K562 (cell line): ENCODE measurements at regions of chr13 and their contacts with region 1.

Region 1: DNA sequence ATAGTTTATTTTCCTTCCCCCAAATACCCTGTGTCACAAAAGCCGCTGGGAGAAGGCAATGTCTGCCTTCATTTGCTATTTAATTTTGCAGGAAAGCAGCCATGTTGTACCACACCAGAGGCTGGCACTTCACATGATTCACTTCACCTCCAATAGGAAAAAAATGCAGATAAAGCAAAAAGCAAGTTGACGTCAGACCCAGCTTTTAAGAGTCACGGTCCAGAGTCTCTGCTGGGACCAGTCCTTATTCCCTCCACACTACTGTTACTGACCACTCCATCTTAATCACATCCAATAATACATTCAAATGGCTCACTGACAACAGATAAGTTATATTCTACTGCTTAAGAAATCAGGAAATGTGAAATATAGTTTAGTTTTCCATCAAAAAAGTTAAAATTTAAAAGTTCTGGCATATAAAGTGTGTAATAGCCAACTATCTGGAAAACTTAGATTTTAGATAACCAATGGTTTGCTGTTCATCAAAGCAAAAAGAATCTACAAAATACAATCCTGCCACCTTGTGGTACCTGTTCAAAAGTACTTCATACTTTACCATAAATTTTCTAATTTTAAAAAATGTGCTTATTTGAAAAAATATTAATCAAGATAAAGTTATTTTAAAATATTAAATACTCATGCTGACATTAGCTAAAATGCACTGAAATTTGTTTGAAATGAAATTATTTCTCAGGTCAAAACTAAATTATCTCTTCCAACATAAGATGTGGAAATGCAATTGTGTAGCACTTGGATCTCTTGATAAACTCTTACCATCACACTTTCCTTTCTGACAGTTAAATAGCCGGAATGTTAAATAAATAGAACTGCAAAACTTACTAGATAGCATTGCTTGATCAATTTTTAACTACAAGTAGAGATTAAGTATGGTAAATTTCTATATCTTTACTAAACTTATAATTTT is 97.3 kb downstream of the SERP2 start:
- DNase-seq: peak; percentile 5 to 34 (median 6)
- ATAC-seq: no peak
- H3K4me3 ChIP-seq: no peak overlapping the region
- H3K27ac ChIP-seq: no peak overlapping the region
- H3K4me1 ChIP-seq: no peaks in the 10 kb centered on the region
- H3K27me3 ChIP-seq: no peaks in the 10 kb centered on the region
- CTCF ChIP-seq: peak in 2 of 3 experiments; percentile 30 to 65; a peak in 3 of 6 replicates
- EP300 ChIP-seq: no peak
- POLR2A ChIP-seq: no peak
- RAD21 ChIP-seq: peak; percentile 72 to 74

Region 2: DNA sequence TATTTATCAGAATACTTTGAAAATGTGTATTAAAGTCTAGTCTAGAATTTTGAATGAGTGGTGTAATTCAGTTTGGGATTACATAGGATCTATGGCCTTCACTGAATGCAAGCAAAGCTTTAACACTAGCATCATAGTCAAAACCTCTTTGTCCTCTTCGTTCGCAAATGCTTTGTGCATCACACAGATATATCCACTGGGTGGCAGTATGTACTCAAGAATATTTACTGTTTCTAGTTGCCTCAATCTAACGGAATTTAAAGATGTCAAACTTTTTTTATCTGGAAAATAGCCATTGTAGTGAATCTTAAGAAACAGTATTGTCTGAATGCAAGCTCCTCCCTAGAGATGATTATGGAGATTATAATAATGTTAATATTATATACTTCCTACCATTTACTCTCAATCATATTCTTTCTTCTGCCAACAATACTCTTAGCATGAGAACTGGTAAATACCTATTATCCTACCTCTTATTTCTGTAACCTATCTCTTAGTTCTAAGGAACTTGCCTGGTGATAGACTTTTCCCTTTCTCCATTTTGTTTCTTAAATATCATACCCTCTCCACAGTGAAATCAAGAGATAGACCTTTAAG is 565.4 kb before region 1 on chr13:
- CTCF ChIA-PET with region 1: interaction called, 7 read pairs
- POLR2A ChIA-PET with region 1: no interaction called
- in situ Hi-C with region 1: loop called (anchors 10 kb)
- intact Hi-C with region 1: loop called (anchors 2 kb)
- DNase-seq: peak; percentile 21 to 52 (median 24)
- ATAC-seq: peak; percentile 64; the same call in 2 of the 3 replicates
- H3K4me3 ChIP-seq: no peak overlapping the region
- H3K27ac ChIP-seq: no peak overlapping the region
- H3K4me1 ChIP-seq: no peaks in the 10 kb centered on the region
- H3K27me3 ChIP-seq: no peaks in the 10 kb centered on the region
- CTCF ChIP-seq: peak; percentile 43 to 68 (median 45); a peak in 5 of 6 replicates
- EP300 ChIP-seq: no peak
- POLR2A ChIP-seq: no peak
- RAD21 ChIP-seq: peak; percentile 72 to 81

Region 3: GRCh38 chr13:43915451-43915850 is 555.4 kb before region 1 on chr13:
- CTCF ChIA-PET with region 1: no interaction called
- POLR2A ChIA-PET with region 1: no interaction called
- in situ Hi-C with region 1: loop called (anchors 10 kb)
- intact Hi-C with region 1: no loop called
- DNase-seq: no peak
- ATAC-seq: no peak
- H3K4me3 ChIP-seq: no peak overlapping the region
- H3K27ac ChIP-seq: no peak overlapping the region
- H3K4me1 ChIP-seq: no peaks in the 10 kb centered on the region
- H3K27me3 ChIP-seq: no peaks in the 10 kb centered on the region; a peak in 1 of 5 replicates
- CTCF ChIP-seq: no peak
- EP300 ChIP-seq: no peak
- POLR2A ChIP-seq: no peak
- RAD21 ChIP-seq: no peak

Region 4: DNA sequence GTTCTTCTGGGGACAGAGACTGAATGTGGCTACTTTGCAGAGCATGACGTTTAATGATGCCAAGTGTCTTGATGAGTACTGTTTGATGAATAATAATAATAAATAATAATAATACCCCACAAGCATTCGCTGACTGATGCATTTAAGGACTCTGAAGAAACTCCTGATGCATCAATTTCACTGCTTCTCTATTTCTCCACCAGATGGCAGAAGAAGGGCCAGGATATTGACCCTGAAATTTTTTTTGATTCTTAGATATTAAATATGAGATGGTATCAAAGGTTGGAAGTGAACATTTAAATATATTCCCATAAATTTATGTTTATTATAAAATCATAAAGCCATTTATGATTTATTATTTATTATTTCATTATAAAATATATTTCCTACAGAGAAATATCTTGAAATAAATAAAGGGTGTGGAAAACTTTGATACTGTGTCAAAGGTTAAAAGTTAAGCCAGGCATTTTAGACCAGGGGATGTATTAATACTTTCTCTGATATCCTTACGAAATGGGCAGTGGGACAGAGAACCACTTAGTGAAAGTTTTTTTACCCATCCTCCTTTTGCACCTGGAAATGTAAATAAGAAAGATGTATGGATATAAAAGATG is 420.3 kb before region 1 on chr13:
- CTCF ChIA-PET with region 1: interaction called, 9 read pairs
- POLR2A ChIA-PET with region 1: no interaction called
- in situ Hi-C with region 1: loop called (anchors 25 kb)
- intact Hi-C with region 1: loop called (anchors 5 kb)
- DNase-seq: peak in 3 of 4 experiments; percentile 4 to 6 (median 6)
- ATAC-seq: no peak
- H3K4me3 ChIP-seq: no peak overlapping the region
- H3K27ac ChIP-seq: no peak overlapping the region
- H3K4me1 ChIP-seq: no peaks in the 10 kb centered on the region
- H3K27me3 ChIP-seq: no peaks in the 10 kb centered on the region; a peak in 1 of 5 replicates
- CTCF ChIP-seq: peak in 2 of 3 experiments; percentile 24 to 52; a peak in 2 of 6 replicates
- EP300 ChIP-seq: no peak
- POLR2A ChIP-seq: no peak
- RAD21 ChIP-seq: peak; percentile 45 to 54